ENCODE measurements at regions of chr19 and their contacts with region 1.

Region 1: GRCh38 chr19:36114763-36115452 is at the start of gene POLR2I:
- DNase-seq: peak; percentile 99
- H3K4me3 Mint-ChIP-seq: peak within 1 kb of the TSS; percentile 90
- H3K27ac Mint-ChIP-seq: peak within 1 kb of the TSS; percentile 89
- H3K4me1 Mint-ChIP-seq: peaks cover 21% of the 10 kb centered on the region
- H3K27me3 Mint-ChIP-seq: no peaks in the 10 kb centered on the region
- total RNA-seq, gene POLR2I: 68.9 and 75.3 TPM in 2 replicates

Region 2: DNA sequence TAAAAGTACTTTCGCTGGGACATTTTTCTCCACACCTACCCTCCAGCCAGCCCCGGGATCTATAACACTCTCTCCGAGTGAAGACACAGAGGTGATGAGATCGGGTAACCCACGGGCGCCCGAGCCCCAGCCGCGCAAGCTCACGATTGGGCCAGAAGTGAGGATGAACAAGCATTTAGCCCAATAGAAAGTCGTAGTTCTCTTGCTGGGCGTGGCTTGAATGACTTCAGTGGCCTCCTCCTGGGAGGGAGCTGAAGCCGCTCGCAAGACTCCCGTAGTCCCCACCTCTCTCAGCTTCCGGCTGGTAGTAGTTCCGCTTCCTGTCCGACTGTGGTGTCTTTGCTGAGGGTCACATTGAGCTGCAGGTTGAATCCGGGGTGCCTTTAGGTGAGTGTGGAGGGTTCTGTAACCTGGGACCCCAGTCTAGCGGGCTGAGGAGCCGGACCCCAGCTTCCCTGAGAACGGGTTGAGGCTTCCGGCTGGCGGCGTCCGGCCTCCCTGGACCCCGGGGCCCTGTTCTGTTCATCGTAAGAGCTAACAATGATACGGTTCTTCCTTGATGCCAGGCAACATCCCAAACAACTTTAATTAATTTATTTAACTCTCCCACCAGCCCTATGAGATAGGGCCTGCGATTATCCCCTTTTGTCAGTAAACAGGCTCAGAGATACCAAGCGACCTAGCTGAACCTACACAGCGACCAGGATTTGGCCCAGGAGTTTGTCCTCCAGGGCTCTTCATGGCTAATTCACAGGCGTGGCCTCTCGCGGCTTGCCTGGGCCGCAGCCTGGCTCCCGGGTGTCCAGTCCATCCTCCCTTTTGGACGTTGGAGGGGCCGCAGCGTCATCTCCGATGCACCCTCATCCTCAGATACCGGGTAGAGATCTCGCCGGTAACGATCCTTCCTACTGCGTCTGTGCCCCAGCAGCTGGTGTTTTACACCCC is 466.6 kb before region 1 on chr19 and contains the start of gene COX6B1:
- intact Hi-C with region 1: loop called (anchors 10 kb)
- DNase-seq: peak; percentile 93
- H3K4me3 Mint-ChIP-seq: peak within 1 kb of the TSS; percentile 96
- H3K27ac Mint-ChIP-seq: peak within 1 kb of the TSS; percentile 71
- H3K4me1 Mint-ChIP-seq: peaks cover 17% of the 10 kb centered on the region
- H3K27me3 Mint-ChIP-seq: no peaks in the 10 kb centered on the region
- total RNA-seq, gene COX6B1: 431 and 461 TPM in 2 replicates

Region 3: GRCh38 chr19:35995048-35995993 is 119.6 kb before region 1 on chr19 and contains the start of gene SDHAF1:
- intact Hi-C with region 1: loop called (anchors 1 kb)
- DNase-seq: peak; percentile 91
- H3K4me3 Mint-ChIP-seq: peak within 1 kb of the TSS; percentile 93
- H3K27ac Mint-ChIP-seq: peak within 1 kb of the TSS; percentile 89
- H3K4me1 Mint-ChIP-seq: peaks cover 20% of the 10 kb centered on the region
- H3K27me3 Mint-ChIP-seq: no peaks in the 10 kb centered on the region
- total RNA-seq, gene SDHAF1: 20.0 and 20.8 TPM in 2 replicates

Region 4: GRCh38 chr19:36054119-36054732 is 60.7 kb before region 1 on chr19 and contains the start of gene THAP8:
- intact Hi-C with region 1: loop called (anchors 1 kb)
- DNase-seq: peak; percentile 100
- H3K4me3 Mint-ChIP-seq: peak within 1 kb of the TSS; percentile 98
- H3K27ac Mint-ChIP-seq: peak within 1 kb of the TSS; percentile 96
- H3K4me1 Mint-ChIP-seq: peaks cover 20% of the 10 kb centered on the region
- H3K27me3 Mint-ChIP-seq: no peaks in the 10 kb centered on the region
- total RNA-seq, gene THAP8: 1.8 and 2.2 TPM in 2 replicates

Region 5: DNA sequence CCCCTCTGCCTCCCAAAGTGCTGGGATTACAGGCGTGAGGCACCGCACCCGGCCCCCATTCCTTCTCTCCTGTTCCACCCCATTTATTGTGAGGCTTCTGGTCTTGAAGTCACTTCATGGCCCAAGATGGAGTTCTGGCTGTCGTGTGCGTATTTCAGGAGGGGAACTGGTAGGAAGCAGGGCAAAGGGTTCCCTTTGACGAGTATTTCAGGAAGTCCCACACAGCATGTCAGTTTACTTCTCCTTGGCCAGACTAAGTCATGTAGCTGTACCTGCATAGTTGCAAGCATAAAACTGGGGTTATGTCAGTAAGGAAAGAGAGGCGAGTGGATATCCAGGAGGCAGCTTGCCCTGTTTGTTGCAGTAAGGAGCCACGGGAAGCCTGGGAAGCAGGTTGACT is 50.1 kb before region 1 on chr19:
- intact Hi-C with region 1: no loop called
- DNase-seq: no peak
- H3K4me3 Mint-ChIP-seq: no peak overlapping the region
- H3K27ac Mint-ChIP-seq: no peak overlapping the region
- H3K4me1 Mint-ChIP-seq: no peaks in the 10 kb centered on the region
- H3K27me3 Mint-ChIP-seq: no peaks in the 10 kb centered on the region

Region 6: DNA sequence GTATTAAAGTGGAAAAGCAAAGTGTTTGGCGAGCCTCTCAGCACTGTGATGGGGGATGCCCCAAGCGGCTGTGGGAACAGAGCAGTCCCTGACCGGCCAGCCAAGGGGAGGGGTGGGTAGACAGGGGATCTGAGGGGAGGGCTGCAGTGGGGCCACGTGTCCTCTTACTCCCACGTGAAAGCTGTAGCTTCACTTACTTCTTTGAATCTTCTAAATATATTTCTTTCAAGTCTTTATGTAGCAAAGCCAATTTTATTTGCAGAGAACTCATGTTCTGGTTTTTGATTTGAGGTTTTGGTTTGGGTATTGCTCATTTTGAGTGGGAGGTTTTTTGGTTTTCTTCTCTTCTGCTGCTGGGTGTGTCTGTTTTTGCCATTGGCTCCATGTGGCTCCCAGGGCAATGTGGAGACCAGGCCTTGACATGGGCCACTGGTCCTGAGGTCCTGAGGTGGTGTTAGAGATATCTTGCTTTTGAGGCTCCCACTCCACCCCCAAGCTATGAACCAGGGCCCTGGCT is 21.7 kb before region 1 on chr19:
- intact Hi-C with region 1: no loop called
- DNase-seq: no peak
- H3K4me3 Mint-ChIP-seq: no peak overlapping the region
- H3K27ac Mint-ChIP-seq: peak overlapping the region; percentile 51
- H3K4me1 Mint-ChIP-seq: peaks cover 15% of the 10 kb centered on the region
- H3K27me3 Mint-ChIP-seq: no peaks in the 10 kb centered on the region

Region 7: GRCh38 chr19:36139473-36140303 is 24.8 kb after region 1 on chr19 and contains the start of gene CAPNS1:
- intact Hi-C with region 1: loop called (anchors 1 kb)
- DNase-seq: peak; percentile 91
- H3K4me3 Mint-ChIP-seq: peak within 1 kb of the TSS; percentile 94
- H3K27ac Mint-ChIP-seq: peak within 1 kb of the TSS; percentile 95
- H3K4me1 Mint-ChIP-seq: peaks cover 16% of the 10 kb centered on the region
- H3K27me3 Mint-ChIP-seq: no peaks in the 10 kb centered on the region
- total RNA-seq, gene CAPNS1: 424 and 431 TPM in 2 replicates